AG04450 (cell line): ENCODE measurements at regions of chr6 and their contacts with region 1.

Region 1: GRCh38 chr6:1596088-1596852 is 13.4 kb upstream of the FOXC1 start:
- DNase-seq: no peak
- H3K4me3 ChIP-seq: peak overlapping the region; percentile 58
- H3K27ac ChIP-seq: no peak overlapping the region
- H3K27me3 ChIP-seq: peaks cover 40% of the 10 kb centered on the region
- CTCF ChIP-seq: peak; percentile 93

Region 2: GRCh38 chr6:1578293-1578745 is 18.0 kb before region 1 on chr6:
- CTCF ChIA-PET with region 1: no interaction called
- POLR2A ChIA-PET with region 1: no interaction called
- DNase-seq: no peak
- H3K4me3 ChIP-seq: no peak overlapping the region
- H3K27ac ChIP-seq: no peak overlapping the region
- H3K27me3 ChIP-seq: peaks cover 7% of the 10 kb centered on the region
- CTCF ChIP-seq: no peak

Region 3: GRCh38 chr6:2103644-2104523 is 507.6 kb after region 1 on chr6:
- CTCF ChIA-PET with region 1: interaction called, 26 read pairs
- POLR2A ChIA-PET with region 1: no interaction called
- DNase-seq: no peak
- H3K4me3 ChIP-seq: no peak overlapping the region
- H3K27ac ChIP-seq: no peak overlapping the region
- H3K27me3 ChIP-seq: no peaks in the 10 kb centered on the region
- CTCF ChIP-seq: peak; percentile 70

Region 4: GRCh38 chr6:2441601-2442475 is 845.6 kb after region 1 on chr6:
- CTCF ChIA-PET with region 1: interaction called, 58 read pairs
- POLR2A ChIA-PET with region 1: no interaction called
- DNase-seq: no peak
- H3K4me3 ChIP-seq: no peak overlapping the region
- H3K27ac ChIP-seq: no peak overlapping the region
- H3K27me3 ChIP-seq: no peaks in the 10 kb centered on the region
- CTCF ChIP-seq: no peak

Region 5: GRCh38 chr6:2695454-2696095 is 1099.3 kb after region 1 on chr6:
- CTCF ChIA-PET with region 1: interaction called, 17 read pairs
- POLR2A ChIA-PET with region 1: no interaction called
- DNase-seq: peak; percentile 7
- H3K4me3 ChIP-seq: no peak overlapping the region
- H3K27ac ChIP-seq: no peak overlapping the region
- H3K27me3 ChIP-seq: peaks cover 20% of the 10 kb centered on the region
- CTCF ChIP-seq: peak; percentile 48

Region 6: GRCh38 chr6:2749969-2750600 is 1153.8 kb after region 1 on chr6:
- CTCF ChIA-PET with region 1: interaction called, 47 read pairs
- POLR2A ChIA-PET with region 1: no interaction called
- DNase-seq: no peak
- H3K4me3 ChIP-seq: no peak overlapping the region
- H3K27ac ChIP-seq: no peak overlapping the region
- H3K27me3 ChIP-seq: no peaks in the 10 kb centered on the region
- CTCF ChIP-seq: peak; percentile 87